ENCODE measurements at regions of chr11 and their contacts with region 1.

Region 1: GRCh38 chr11:96215110-96215782 is 127.7 kb downstream of the MAML2 start:
- DNase-seq: peak in 12 of 14 experiments; percentile 11 to 71 (median 31)
- ATAC-seq: peak; percentile 68
- H3K4me3 ChIP-seq: peak overlapping the region; percentile 11
- H3K4me3 Mint-ChIP-seq: peak overlapping the region; percentile 65
- H3K27ac ChIP-seq: peak overlapping the region; percentile 75
- H3K27ac Mint-ChIP-seq: peak overlapping the region; percentile 92
- H3K4me1 ChIP-seq: peaks cover 70% of the 10 kb centered on the region
- H3K4me1 Mint-ChIP-seq: peaks cover 87% of the 10 kb centered on the region
- H3K27me3 ChIP-seq: no peaks in the 10 kb centered on the region
- H3K27me3 Mint-ChIP-seq: no peaks in the 10 kb centered on the region
- CTCF ChIP-seq: no peak

Region 2: DNA sequence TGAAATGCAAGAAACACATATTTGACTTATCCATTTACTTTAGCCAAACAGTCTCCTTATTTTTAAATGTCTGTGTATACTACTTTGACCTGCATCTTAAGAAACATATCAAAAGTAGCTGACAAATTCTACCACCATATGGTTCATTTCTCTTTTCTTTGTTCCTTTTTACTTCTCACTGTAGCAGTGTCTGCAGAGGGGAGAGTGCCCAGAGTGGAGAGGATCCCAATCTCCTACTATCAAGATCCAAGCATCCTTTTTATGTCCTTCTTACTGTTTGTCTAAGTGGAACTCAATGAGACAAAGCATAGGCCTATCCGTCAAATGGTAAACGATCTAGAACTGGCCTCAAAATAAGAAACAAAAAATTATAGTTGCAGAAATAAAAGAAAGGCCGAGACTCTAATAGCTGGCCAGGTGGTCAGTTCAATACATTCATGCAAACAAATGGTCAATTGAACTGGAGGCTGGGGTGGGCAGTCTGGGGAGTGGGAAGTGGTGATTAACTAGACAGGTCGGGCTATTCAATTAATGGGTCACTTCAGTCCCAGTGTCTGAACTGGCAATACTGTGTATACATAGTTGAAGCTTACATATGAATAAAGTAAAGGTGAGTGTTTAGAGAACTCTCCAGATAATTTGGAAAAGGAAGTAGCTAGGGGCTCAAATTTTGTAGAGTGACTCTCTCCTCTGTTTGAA is 21.4 kb before region 1 on chr11:
- CTCF ChIA-PET with region 1: no interaction called
- POLR2A ChIA-PET with region 1: interaction called, 13 read pairs
- intact Hi-C with region 1: no loop called
- DNase-seq: no peak
- ATAC-seq: peak; percentile 32
- H3K4me3 ChIP-seq: no peak overlapping the region
- H3K4me3 Mint-ChIP-seq: peak overlapping the region; percentile 74
- H3K27ac ChIP-seq: no peak overlapping the region
- H3K27ac Mint-ChIP-seq: peak overlapping the region; percentile 87
- H3K4me1 ChIP-seq: peaks cover 25% of the 10 kb centered on the region
- H3K4me1 Mint-ChIP-seq: peaks cover 94% of the 10 kb centered on the region
- H3K27me3 ChIP-seq: no peaks in the 10 kb centered on the region
- H3K27me3 Mint-ChIP-seq: no peaks in the 10 kb centered on the region
- CTCF ChIP-seq: no peak

Region 3: DNA sequence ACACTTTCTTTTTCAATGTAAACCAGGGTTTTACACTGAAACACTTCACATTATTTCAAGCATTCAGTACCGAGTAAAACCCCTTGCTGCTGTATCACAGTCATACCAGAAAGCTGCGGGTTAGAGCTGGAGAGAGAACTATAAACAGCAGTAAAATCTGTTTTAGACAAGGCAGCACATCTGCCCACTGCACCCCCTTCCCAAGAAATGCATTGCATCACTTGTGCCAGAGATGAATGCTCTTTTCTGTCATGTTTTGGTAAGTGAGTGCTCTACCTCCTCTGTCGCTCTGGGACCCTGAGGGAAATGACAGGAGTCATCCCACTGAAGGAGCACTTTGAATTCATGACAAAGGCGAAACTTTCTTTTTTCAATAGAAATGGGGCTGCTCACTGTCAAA is 20.5 kb after region 1 on chr11:
- CTCF ChIA-PET with region 1: interaction called, 3 read pairs
- POLR2A ChIA-PET with region 1: interaction called, 29 read pairs
- intact Hi-C with region 1: loop called in 1 of 2 experiments (anchors 2 kb)
- DNase-seq: no peak
- ATAC-seq: peak; percentile 71
- H3K4me3 ChIP-seq: no peak overlapping the region
- H3K4me3 Mint-ChIP-seq: peak overlapping the region; percentile 37
- H3K27ac ChIP-seq: no peak overlapping the region
- H3K27ac Mint-ChIP-seq: no peak overlapping the region
- H3K4me1 ChIP-seq: peaks cover 4% of the 10 kb centered on the region
- H3K4me1 Mint-ChIP-seq: peaks cover 34% of the 10 kb centered on the region
- H3K27me3 ChIP-seq: no peaks in the 10 kb centered on the region
- H3K27me3 Mint-ChIP-seq: no peaks in the 10 kb centered on the region
- CTCF ChIP-seq: no peak